MCF 10A (cell line): ENCODE measurements at regions of chr12 and their contacts with region 1.

Region 1: GRCh38 chr12:21989819-21990412 is 48.7 kb upstream of the ABCC9 start:
- DNase-seq: peak; percentile 39
- H3K4me3 Mint-ChIP-seq: no peak overlapping the region
- H3K27ac Mint-ChIP-seq: no peak overlapping the region
- H3K4me1 Mint-ChIP-seq: no peaks in the 10 kb centered on the region
- H3K27me3 Mint-ChIP-seq: peaks cover 25% of the 10 kb centered on the region
- CTCF ChIP-seq: peak; percentile 57

Region 2: GRCh38 chr12:21607701-21608100 is 382.2 kb before region 1 on chr12:
- CTCF ChIA-PET with region 1: interaction called, 3 read pairs
- POLR2A ChIA-PET with region 1: no interaction called
- intact Hi-C with region 1: loop called (anchors 10 kb)
- DNase-seq: peak; percentile 26
- H3K4me3 Mint-ChIP-seq: no peak overlapping the region
- H3K27ac Mint-ChIP-seq: no peak overlapping the region
- H3K4me1 Mint-ChIP-seq: no peaks in the 10 kb centered on the region
- H3K27me3 Mint-ChIP-seq: no peaks in the 10 kb centered on the region
- CTCF ChIP-seq: peak; percentile 10

Region 3: GRCh38 chr12:22002430-22002829 is 12.5 kb after region 1 on chr12:
- CTCF ChIA-PET with region 1: interaction called, 16 read pairs
- POLR2A ChIA-PET with region 1: no interaction called
- intact Hi-C with region 1: no loop called
- DNase-seq: no peak
- H3K4me3 Mint-ChIP-seq: no peak overlapping the region
- H3K27ac Mint-ChIP-seq: no peak overlapping the region
- H3K4me1 Mint-ChIP-seq: no peaks in the 10 kb centered on the region
- H3K27me3 Mint-ChIP-seq: no peaks in the 10 kb centered on the region
- CTCF ChIP-seq: no peak

Region 4: GRCh38 chr12:22271023-22271422 is 281.1 kb after region 1 on chr12:
- CTCF ChIA-PET with region 1: no interaction called
- POLR2A ChIA-PET with region 1: no interaction called
- intact Hi-C with region 1: no loop called
- DNase-seq: peak; percentile 85
- H3K4me3 Mint-ChIP-seq: no peak overlapping the region
- H3K27ac Mint-ChIP-seq: peak overlapping the region; percentile 71
- H3K4me1 Mint-ChIP-seq: peaks cover 47% of the 10 kb centered on the region
- H3K27me3 Mint-ChIP-seq: no peaks in the 10 kb centered on the region
- CTCF ChIP-seq: no peak